ENCODE measurements at regions of chr3 and their contacts with region 1.

Region 1: GRCh38 chr3:48918388-48919214 is at the start of gene ARIH2:
- DNase-seq: peak; percentile 87 to 90 (median 88)
- H3K4me3 ChIP-seq: peak within 1 kb of the TSS; percentile 81 to 96
- H3K4me3 Mint-ChIP-seq: peak within 1 kb of the TSS; percentile 89 to 97 (median 95)
- H3K27ac ChIP-seq: peak within 1 kb of the TSS; percentile 93
- H3K27ac Mint-ChIP-seq: peak within 1 kb of the TSS; percentile 97 to 100 (median 98)
- H3K4me1 ChIP-seq: peaks cover 29% of the 10 kb centered on the region
- H3K4me1 Mint-ChIP-seq: peaks cover 11 to 37% (median 23%) of the 10 kb centered on the region in 4 donors
- H3K27me3 ChIP-seq: no peaks in the 10 kb centered on the region
- H3K27me3 Mint-ChIP-seq: no peaks in the 10 kb centered on the region
- total RNA-seq, gene ARIH2: 141 to 149 TPM

Region 2: DNA sequence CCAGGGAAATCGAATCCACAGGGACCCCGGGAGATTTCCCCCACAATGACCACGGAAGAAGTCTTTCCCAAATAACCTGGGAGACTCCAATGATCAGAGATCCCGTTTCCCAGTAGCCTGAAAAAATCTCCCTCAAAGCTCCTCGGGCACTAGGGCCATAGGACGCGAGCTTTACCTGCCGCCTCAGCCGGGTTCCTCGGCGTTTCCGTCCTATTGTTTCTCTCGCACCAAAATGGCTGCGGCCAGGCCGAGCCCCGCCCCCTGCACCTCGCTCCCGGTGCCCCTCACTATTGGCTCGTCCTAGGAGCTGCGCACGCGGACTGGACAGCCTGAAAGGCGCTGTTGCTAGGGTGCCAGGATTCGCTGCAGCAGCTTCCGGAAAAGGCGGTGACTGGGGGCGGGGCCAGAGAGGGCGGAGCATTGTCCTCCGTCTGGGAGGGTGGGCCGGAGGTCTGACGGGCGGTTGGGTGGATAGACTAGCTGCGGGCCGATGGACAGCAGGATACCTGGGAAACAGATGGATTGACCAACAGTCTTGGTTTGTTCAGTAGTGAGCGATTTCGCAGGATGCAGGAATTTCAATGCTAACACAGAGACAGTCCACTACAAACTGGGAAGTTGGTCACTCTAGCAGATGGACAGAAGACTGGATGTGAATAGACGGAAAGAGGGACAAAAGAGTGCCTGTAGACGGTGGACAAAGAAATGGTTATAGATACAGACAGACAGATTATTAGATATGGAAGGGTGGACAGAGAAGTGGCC is 201.4 kb before region 1 on chr3 and contains the start of gene IP6K2:
- CTCF ChIA-PET with region 1: interaction called, 3 read pairs
- POLR2A ChIA-PET with region 1: interaction called, 4 read pairs
- intact Hi-C with region 1: loop called (anchors 1 kb)
- DNase-seq: peak; percentile 95 to 99 (median 97)
- H3K4me3 ChIP-seq: peak within 1 kb of the TSS; percentile 90 to 98
- H3K4me3 Mint-ChIP-seq: peak within 1 kb of the TSS; percentile 98 to 100 (median 99)
- H3K27ac ChIP-seq: peak within 1 kb of the TSS; percentile 91
- H3K27ac Mint-ChIP-seq: peak within 1 kb of the TSS; percentile 88 to 99 (median 99)
- H3K4me1 ChIP-seq: peaks cover 44% of the 10 kb centered on the region
- H3K4me1 Mint-ChIP-seq: peaks cover 28 to 51% (median 37%) of the 10 kb centered on the region in 4 donors
- H3K27me3 ChIP-seq: no peaks in the 10 kb centered on the region
- H3K27me3 Mint-ChIP-seq: no peaks in the 10 kb centered on the region
- total RNA-seq, gene IP6K2: 84.5 to 91.8 TPM

Region 3: GRCh38 chr3:48739955-48740823 is 178.4 kb before region 1 on chr3:
- CTCF ChIA-PET with region 1: interaction called, 7 read pairs
- POLR2A ChIA-PET with region 1: interaction called, 4 read pairs
- intact Hi-C with region 1: loop called (anchors 1 kb)
- DNase-seq: peak; percentile 25 to 43 (median 37)
- H3K4me3 ChIP-seq: no peak overlapping the region
- H3K4me3 Mint-ChIP-seq: no peak overlapping the region
- H3K27ac ChIP-seq: no peak overlapping the region
- H3K27ac Mint-ChIP-seq: peak overlapping the region in 1 of 7 donors; percentile 23
- H3K4me1 ChIP-seq: no peaks in the 10 kb centered on the region
- H3K4me1 Mint-ChIP-seq: peaks cover 0 to 10% (median 2%) of the 10 kb centered on the region in 4 donors
- H3K27me3 ChIP-seq: no peaks in the 10 kb centered on the region
- H3K27me3 Mint-ChIP-seq: no peaks in the 10 kb centered on the region

Region 4: GRCh38 chr3:48811524-48811923 is 107.1 kb before region 1 on chr3:
- CTCF ChIA-PET with region 1: interaction called, 4 read pairs
- POLR2A ChIA-PET with region 1: interaction called, 13 read pairs
- intact Hi-C with region 1: no loop called
- DNase-seq: no peak
- H3K4me3 ChIP-seq: no peak overlapping the region
- H3K4me3 Mint-ChIP-seq: peak overlapping the region in 4 of 8 donors; percentile 4 to 55 (median 12)
- H3K27ac ChIP-seq: peak overlapping the region; percentile 21
- H3K27ac Mint-ChIP-seq: peak overlapping the region; percentile 62 to 95 (median 92)
- H3K4me1 ChIP-seq: peaks cover 32% of the 10 kb centered on the region
- H3K4me1 Mint-ChIP-seq: peaks cover 19 to 38% (median 29%) of the 10 kb centered on the region in 4 donors
- H3K27me3 ChIP-seq: no peaks in the 10 kb centered on the region
- H3K27me3 Mint-ChIP-seq: no peaks in the 10 kb centered on the region

Region 5: GRCh38 chr3:48847504-48848423 is 70.8 kb before region 1 on chr3 and contains the start of gene PRKAR2A:
- CTCF ChIA-PET with region 1: interaction called, 3 read pairs
- POLR2A ChIA-PET with region 1: interaction called, 14 read pairs
- intact Hi-C with region 1: loop called (anchors 1 kb)
- DNase-seq: peak; percentile 69 to 82 (median 76)
- H3K4me3 ChIP-seq: peak within 1 kb of the TSS; percentile 69 to 89
- H3K4me3 Mint-ChIP-seq: peak within 1 kb of the TSS; percentile 85 to 91 (median 89)
- H3K27ac ChIP-seq: peak within 1 kb of the TSS; percentile 74
- H3K27ac Mint-ChIP-seq: peak within 1 kb of the TSS; percentile 94 to 98 (median 97)
- H3K4me1 ChIP-seq: peaks cover 33% of the 10 kb centered on the region
- H3K4me1 Mint-ChIP-seq: peaks cover 19 to 39% (median 29%) of the 10 kb centered on the region in 4 donors
- H3K27me3 ChIP-seq: no peaks in the 10 kb centered on the region
- H3K27me3 Mint-ChIP-seq: no peaks in the 10 kb centered on the region
- total RNA-seq, gene PRKAR2A: 41.7 to 45.0 TPM